ENCODE measurements at regions of chr5 and their contacts with region 1.

Region 1: GRCh38 chr5:131252824-131253171 is 11.1 kb upstream of the CDC42SE2 start:
- DNase-seq: peak; percentile 52
- ATAC-seq: peak; percentile 86
- H3K4me3 Mint-ChIP-seq: peak overlapping the region; percentile 84
- H3K27ac Mint-ChIP-seq: peak overlapping the region; percentile 94
- H3K4me1 Mint-ChIP-seq: peaks cover 81% of the 10 kb centered on the region
- H3K27me3 Mint-ChIP-seq: no peaks in the 10 kb centered on the region
- CTCF ChIP-seq: no peak

Region 2: DNA sequence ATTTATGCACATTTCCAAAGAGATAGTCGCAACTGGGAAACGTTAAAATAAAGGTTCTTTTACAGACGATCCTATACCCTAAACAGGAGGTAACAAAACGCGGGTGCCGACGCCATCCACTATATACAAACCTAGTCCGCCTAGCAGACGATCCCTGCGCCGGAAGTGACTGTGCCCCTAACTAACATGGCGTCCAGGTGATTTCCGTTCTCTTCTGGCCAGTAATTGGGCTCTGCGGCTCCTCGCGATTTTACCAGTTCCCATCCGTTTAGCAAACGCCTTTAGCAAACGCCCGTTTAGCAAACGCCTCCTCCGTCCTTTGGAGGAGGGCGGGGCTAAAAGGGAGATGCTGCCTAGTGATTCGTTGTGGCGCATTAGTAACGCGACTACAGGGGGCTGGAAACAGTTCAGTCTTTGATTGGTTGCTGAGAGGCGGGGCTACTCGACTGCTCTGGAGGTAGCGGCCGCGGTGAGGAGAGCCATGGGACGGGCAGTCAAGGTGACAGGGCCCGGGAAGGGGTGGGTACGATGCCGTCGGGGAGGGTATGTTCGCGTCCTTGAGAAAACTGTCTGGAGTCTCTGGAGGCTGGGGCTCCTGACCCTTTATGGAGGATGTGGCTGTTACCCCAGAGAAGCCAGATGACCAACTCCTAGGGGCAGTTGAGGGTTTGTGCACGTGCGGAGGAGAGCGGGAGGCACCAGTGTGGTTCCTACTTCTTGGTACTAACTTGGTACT is 82.1 kb before region 1 on chr5 and contains the start of gene LYRM7:
- CTCF ChIA-PET with region 1: interaction called, 3 read pairs
- POLR2A ChIA-PET with region 1: interaction called, 5 read pairs
- intact Hi-C with region 1: loop called (anchors 1 kb)
- DNase-seq: peak; percentile 80
- ATAC-seq: peak; percentile 96
- H3K4me3 Mint-ChIP-seq: peak within 1 kb of the TSS; percentile 98
- H3K27ac Mint-ChIP-seq: peak within 1 kb of the TSS; percentile 93
- H3K4me1 Mint-ChIP-seq: peaks cover 42% of the 10 kb centered on the region
- H3K27me3 Mint-ChIP-seq: no peaks in the 10 kb centered on the region
- CTCF ChIP-seq: no peak
- total RNA-seq, gene LYRM7: 11.9 and 13.1 TPM in 2 replicates

Region 3: DNA sequence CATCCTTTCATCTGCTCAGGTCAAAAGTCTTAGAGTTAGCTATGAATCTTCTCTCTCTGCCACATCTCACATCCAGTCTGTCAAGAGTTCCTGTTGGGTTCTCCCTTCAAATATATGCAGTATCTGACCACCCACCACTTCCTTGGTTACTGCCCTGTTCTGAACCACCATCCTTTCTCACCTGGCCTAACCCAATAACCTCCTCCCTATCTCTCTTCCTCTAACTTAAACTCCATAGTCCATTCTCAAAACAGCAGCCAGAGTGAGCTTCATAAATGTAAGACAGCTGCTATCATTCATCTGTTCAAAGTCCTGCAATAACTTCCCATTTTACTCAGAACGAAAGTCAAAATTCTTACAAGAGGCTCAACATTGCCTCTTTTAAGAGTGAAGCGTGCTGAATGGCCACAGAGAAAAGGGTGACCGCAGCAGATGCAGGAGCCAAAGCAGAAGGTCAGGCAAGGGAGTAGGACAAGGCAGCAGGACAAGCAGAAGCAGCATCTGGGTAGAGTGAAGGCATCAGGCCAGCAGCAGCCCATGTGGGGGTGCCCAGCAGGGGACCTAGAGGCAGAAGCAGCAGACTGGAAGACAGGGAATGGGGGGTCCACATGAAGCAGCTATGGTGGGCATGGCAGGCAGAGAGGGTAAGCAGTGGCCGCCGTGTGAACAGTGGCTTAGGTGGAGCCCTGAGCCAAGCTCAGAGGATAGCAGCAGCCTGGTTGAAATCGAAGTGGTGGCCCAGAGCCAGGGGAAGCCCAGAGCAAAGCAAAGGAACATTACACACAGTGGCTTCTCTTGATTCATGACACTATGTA is 28.2 kb before region 1 on chr5:
- CTCF ChIA-PET with region 1: no interaction called
- POLR2A ChIA-PET with region 1: interaction called, 13 read pairs
- intact Hi-C with region 1: no loop called
- DNase-seq: peak; percentile 33
- ATAC-seq: peak; percentile 84
- H3K4me3 Mint-ChIP-seq: no peak overlapping the region
- H3K27ac Mint-ChIP-seq: no peak overlapping the region
- H3K4me1 Mint-ChIP-seq: peaks cover 27% of the 10 kb centered on the region
- H3K27me3 Mint-ChIP-seq: no peaks in the 10 kb centered on the region
- CTCF ChIP-seq: no peak

Region 4: DNA sequence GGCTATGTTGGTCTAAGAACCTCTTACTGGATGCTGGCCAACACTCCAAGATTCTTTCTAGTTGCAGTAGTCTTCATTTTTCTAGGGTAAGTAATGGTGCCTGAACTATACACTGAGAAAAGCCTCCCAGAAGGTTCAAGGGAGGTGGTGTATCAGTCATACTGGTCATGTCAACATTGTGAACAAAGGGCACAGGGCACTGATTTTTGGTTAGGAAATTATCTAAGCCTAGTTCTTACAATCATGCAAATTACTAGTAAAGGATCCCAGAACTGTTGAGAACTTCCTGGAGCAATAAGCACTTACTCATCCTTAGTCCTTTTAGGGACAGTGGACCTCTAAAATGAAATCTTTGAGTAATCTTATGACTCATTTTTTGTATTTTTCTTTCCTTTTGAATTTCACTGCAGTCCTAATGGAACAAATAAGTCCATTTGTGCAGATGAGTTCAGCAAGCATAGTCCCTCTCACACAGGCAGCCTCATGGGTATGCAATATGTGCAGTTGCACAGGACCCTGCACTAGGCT is 10.0 kb before region 1 on chr5:
- CTCF ChIA-PET with region 1: no interaction called
- POLR2A ChIA-PET with region 1: interaction called, 12 read pairs
- intact Hi-C with region 1: no loop called
- DNase-seq: no peak
- ATAC-seq: no peak
- H3K4me3 Mint-ChIP-seq: no peak overlapping the region
- H3K27ac Mint-ChIP-seq: no peak overlapping the region
- H3K4me1 Mint-ChIP-seq: peaks cover 11% of the 10 kb centered on the region
- H3K27me3 Mint-ChIP-seq: no peaks in the 10 kb centered on the region
- CTCF ChIP-seq: no peak